ENCODE measurements at regions of chr21 and their contacts with region 1.

Region 1: GRCh38 chr21:43938751-43939442 is 73.2 kb upstream of the TRAPPC10 start:
- DNase-seq: peak; percentile 94
- ATAC-seq: peak; percentile 93
- H3K4me3 Mint-ChIP-seq: peak overlapping the region; percentile 39
- H3K27ac Mint-ChIP-seq: peak overlapping the region; percentile 19; the same call in 1 of the 2 replicates
- H3K4me1 Mint-ChIP-seq: peaks cover 3% of the 10 kb centered on the region
- H3K27me3 Mint-ChIP-seq: no peaks in the 10 kb centered on the region
- CTCF ChIP-seq: peak; percentile 92

Region 2: GRCh38 chr21:43619856-43620255 is 319.0 kb before region 1 on chr21:
- CTCF ChIA-PET with region 1: no interaction called
- POLR2A ChIA-PET with region 1: no interaction called
- DNase-seq: no peak
- ATAC-seq: peak; percentile 63
- H3K4me3 Mint-ChIP-seq: no peak overlapping the region
- H3K27ac Mint-ChIP-seq: no peak overlapping the region
- H3K4me1 Mint-ChIP-seq: no peaks in the 10 kb centered on the region
- H3K27me3 Mint-ChIP-seq: no peaks in the 10 kb centered on the region; the same call in 1 of the 2 replicates
- CTCF ChIP-seq: no peak

Region 3: DNA sequence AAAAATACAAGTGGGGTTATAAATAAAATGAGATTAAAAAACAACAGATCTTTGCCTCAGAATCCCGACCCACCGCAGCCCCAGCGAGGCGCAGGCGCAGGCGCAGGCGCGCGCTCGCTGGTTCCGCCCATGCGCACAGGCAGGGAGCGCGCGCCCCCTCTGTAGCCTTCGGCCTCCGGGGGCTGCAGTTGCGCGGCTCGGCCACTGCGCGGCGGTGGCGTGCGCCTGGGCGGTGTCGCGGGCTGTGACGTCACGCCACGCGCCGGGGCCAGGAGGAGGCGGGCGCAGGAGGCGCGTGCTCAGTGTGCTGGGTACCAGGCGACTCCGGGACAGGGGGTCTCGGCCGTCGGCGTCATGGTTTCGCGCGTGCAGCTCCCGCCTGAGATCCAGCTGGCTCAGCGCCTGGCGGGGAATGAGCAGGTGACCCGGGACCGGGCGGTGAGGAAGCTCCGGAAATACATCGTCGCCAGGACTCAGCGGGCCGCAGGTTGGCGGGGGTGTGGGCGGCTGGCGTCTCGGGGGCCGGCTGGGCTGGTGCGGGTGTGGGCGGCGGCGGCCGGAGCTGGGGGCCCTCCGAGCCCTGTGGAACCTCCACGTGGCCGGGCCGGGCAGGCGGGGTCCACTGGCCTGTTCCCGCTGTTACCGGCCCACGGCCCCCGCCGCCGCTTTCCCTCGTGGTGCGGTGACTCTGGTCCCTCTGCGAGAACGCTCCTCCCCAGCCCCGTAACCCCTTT is 149.5 kb before region 1 on chr21 and contains the start of gene RRP1:
- CTCF ChIA-PET with region 1: interaction called, 14 read pairs
- POLR2A ChIA-PET with region 1: no interaction called
- DNase-seq: peak; percentile 90
- ATAC-seq: peak; percentile 94
- H3K4me3 Mint-ChIP-seq: peak within 1 kb of the TSS; percentile 97
- H3K27ac Mint-ChIP-seq: peak within 1 kb of the TSS; percentile 95
- H3K4me1 Mint-ChIP-seq: peaks cover 11% of the 10 kb centered on the region
- H3K27me3 Mint-ChIP-seq: no peaks in the 10 kb centered on the region
- CTCF ChIP-seq: peak; percentile 99
- total RNA-seq, gene RRP1: 45.0 to 53.0 TPM (median 45.9 TPM) in 3 replicates

Region 4: GRCh38 chr21:43816611-43817478 is 122.1 kb before region 1 on chr21:
- CTCF ChIA-PET with region 1: interaction called, 40 read pairs
- POLR2A ChIA-PET with region 1: no interaction called
- DNase-seq: peak; percentile 41
- ATAC-seq: peak; percentile 43
- H3K4me3 Mint-ChIP-seq: no peak overlapping the region
- H3K27ac Mint-ChIP-seq: no peak overlapping the region
- H3K4me1 Mint-ChIP-seq: peaks cover 14% of the 10 kb centered on the region
- H3K27me3 Mint-ChIP-seq: no peaks in the 10 kb centered on the region
- CTCF ChIP-seq: no peak

Region 5: DNA sequence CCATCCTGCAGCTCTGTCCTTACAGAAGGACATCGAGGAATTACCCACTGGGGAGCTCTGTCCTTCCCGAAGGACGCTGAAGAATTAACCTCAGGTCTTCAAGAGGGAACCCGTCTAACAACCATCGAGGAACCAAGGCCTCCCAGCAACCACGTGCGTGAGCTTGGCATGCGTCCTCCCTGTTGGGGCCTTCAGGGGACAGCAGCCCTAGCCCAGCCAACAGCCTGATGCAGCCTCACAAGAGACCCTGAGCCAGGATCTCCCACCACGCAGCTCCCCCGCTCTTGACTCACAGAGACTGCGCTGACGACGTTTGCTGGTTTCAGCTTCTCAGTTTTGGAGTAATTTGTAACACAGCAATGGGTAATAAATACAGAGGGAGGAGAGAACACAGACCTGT is 93.5 kb before region 1 on chr21:
- CTCF ChIA-PET with region 1: interaction called, 11 read pairs
- POLR2A ChIA-PET with region 1: no interaction called
- DNase-seq: no peak
- ATAC-seq: 0 out of 2 replicates have a peak, but pooled peaks have one; percentile 22
- H3K4me3 Mint-ChIP-seq: no peak overlapping the region
- H3K27ac Mint-ChIP-seq: peak overlapping the region; percentile 41; the same call in 1 of the 2 replicates
- H3K4me1 Mint-ChIP-seq: no peaks in the 10 kb centered on the region
- H3K27me3 Mint-ChIP-seq: no peaks in the 10 kb centered on the region; the same call in 1 of the 2 replicates
- CTCF ChIP-seq: no peak

Region 6: GRCh38 chr21:43921979-43922945 is 16.6 kb before region 1 on chr21:
- CTCF ChIA-PET with region 1: interaction called, 18 read pairs
- POLR2A ChIA-PET with region 1: no interaction called
- DNase-seq: no peak
- ATAC-seq: peak; percentile 25
- H3K4me3 Mint-ChIP-seq: no peak overlapping the region
- H3K27ac Mint-ChIP-seq: peak overlapping the region; percentile 72
- H3K4me1 Mint-ChIP-seq: peaks cover 34% of the 10 kb centered on the region
- H3K27me3 Mint-ChIP-seq: no peaks in the 10 kb centered on the region
- CTCF ChIP-seq: no peak

Region 7: DNA sequence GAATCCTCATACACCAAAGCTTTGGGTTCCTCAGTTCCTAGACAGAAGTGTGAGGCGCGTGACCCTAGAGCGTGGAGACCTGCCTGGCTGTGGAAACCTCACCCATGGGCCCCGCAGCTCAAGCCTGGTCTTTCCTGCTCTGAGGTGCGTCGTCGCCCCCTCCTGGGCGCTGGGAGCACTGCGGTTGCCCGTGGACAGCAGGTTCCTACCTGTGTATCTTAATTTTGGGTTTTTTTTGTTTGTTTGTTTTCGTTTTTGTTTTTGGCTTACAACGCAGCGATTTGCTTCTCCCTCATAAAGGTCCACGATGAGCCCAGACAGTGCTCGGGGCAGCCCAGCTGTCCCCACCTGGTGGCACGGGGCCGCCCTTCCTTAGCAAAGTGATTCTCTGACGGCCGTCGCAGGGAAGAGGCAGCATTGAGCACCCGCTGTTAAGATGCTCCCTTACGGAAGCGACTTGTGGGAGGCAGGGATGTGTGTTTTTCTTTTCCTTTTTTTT is 36.6 kb after region 1 on chr21:
- CTCF ChIA-PET with region 1: interaction called, 13 read pairs
- POLR2A ChIA-PET with region 1: interaction called, 7 read pairs
- DNase-seq: peak; percentile 87
- ATAC-seq: peak; percentile 86
- H3K4me3 Mint-ChIP-seq: peak overlapping the region; percentile 59
- H3K27ac Mint-ChIP-seq: 0 out of 2 replicates have a peak overlapping the region, but pooled peaks have one; percentile 76
- H3K4me1 Mint-ChIP-seq: no peaks in the 10 kb centered on the region
- H3K27me3 Mint-ChIP-seq: no peaks in the 10 kb centered on the region
- CTCF ChIP-seq: peak; percentile 83

Measured in WTC11 (cell line).